Endothelial cell of umbilical vein (primary cell): ENCODE measurements at regions of chr3 and their contacts with region 1.

Region 1: GRCh38 chr3:127574880-127575878 is 15.4 kb downstream of the TPRA1 start:
- DNase-seq: peak; percentile 93
- H3K4me3 ChIP-seq: no peak overlapping the region
- H3K27ac ChIP-seq: no peak overlapping the region
- H3K4me1 ChIP-seq: no peaks in the 10 kb centered on the region
- H3K27me3 ChIP-seq: no peaks in the 10 kb centered on the region
- CTCF ChIP-seq: peak; percentile 99
- POLR2A ChIP-seq: no peak

Region 2: DNA sequence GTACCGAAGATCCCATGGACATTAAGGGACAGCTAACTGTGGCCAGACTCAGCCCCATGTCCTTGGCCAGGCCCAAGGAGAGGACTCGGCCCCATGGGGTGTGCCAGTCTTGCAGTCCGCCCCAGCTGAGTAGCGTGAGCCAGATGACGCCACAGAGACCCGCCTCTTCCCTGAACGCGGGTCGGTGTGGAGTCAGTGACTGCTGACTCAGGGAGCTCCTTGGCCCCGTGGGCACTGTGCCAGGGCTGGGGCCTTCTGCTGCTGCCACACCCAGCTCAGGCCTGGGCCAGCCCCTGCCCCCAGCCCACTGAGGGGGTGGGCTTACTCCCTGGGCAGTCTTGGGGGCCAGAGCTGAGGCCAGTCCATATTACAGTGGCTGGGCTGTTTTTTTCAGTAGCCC is 539.5 kb before region 1 on chr3:
- CTCF ChIA-PET with region 1: no interaction called
- POLR2A ChIA-PET with region 1: no interaction called
- dilution Hi-C with region 1: no loop called
- intact Hi-C with region 1: no loop called
- DNase-seq: no peak
- H3K4me3 ChIP-seq: no peak overlapping the region
- H3K27ac ChIP-seq: no peak overlapping the region
- H3K4me1 ChIP-seq: no peaks in the 10 kb centered on the region
- H3K27me3 ChIP-seq: no peaks in the 10 kb centered on the region
- CTCF ChIP-seq: no peak
- POLR2A ChIP-seq: no peak

Region 3: DNA sequence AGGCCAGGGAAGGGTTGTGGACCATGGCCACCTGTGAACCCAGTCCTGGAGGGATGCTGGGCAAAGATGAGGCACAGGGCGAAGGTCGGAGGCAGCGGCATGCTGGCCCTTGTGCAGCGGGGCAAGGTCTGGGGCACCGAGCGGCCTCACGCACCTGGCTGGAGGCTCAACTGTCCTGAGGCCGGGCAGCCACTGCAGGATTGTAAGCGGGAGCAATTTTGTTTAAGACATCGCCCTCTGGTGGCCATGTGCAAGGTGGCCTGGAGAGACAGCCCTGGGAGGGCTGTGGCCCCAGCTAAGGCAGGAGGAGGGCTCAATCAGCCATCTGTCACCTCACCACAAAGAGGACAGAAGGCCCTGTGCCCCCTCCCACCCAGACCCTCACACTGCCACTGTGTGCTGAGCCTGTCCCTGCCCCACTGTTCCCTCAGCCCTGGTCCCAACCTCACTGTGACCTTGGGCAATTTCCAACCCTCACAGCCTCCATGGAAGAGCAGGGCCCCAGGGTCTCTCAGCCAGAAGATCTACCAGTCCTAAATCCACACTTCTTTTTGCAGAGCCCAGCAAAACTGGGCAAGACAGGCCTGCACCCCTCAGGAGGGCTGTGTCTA is 30.9 kb before region 1 on chr3:
- CTCF ChIA-PET with region 1: interaction called, 11 read pairs
- POLR2A ChIA-PET with region 1: no interaction called
- dilution Hi-C with region 1: no loop called
- intact Hi-C with region 1: no loop called
- DNase-seq: peak; percentile 47
- H3K4me3 ChIP-seq: no peak overlapping the region
- H3K27ac ChIP-seq: no peak overlapping the region
- H3K4me1 ChIP-seq: peaks cover 4% of the 10 kb centered on the region
- H3K27me3 ChIP-seq: no peaks in the 10 kb centered on the region
- CTCF ChIP-seq: peak; percentile 80 to 89
- POLR2A ChIP-seq: no peak

Region 4: DNA sequence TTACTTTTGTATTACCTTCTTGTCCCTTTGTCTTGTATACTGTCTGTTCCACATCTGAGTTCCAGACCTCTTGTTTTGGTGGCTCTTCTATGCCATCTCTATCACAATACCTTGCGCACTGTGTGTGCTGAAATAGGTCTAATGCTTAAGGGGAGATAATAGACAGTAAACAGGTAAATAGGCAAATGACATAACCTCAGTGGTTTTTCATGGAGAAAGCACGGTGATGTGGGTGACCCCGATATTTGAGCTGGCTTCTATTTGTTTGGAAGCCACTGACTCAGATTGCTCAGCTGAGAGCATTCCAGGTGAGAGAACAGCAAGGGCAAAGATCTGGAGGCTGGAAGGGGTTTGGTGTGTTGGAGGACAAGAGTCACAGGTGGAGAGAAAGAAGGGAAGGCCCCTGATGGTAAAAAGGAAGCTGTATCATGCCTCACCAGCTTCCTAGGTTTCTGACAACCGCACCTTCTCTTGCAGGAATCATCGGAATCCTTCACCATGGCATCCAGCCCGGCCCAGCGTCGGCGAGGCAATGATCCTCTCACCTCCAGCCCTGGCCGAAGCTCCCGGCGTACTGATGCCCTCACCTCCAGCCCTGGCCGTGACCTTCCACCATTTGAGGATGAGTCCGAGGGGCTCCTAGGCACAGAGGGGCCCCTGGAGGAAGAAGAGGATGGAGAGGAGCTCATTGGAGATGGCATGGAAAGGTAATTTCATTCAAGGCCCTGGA is 23.8 kb after region 1 on chr3:
- CTCF ChIA-PET with region 1: interaction called, 43 read pairs
- POLR2A ChIA-PET with region 1: no interaction called
- dilution Hi-C with region 1: no loop called
- intact Hi-C with region 1: no loop called
- DNase-seq: no peak
- H3K4me3 ChIP-seq: peak overlapping the region; percentile 27 to 66 (median 54)
- H3K27ac ChIP-seq: peak overlapping the region; percentile 55
- H3K4me1 ChIP-seq: peaks cover 20% of the 10 kb centered on the region
- H3K27me3 ChIP-seq: no peaks in the 10 kb centered on the region
- CTCF ChIP-seq: no peak
- POLR2A ChIP-seq: no peak

Region 5: DNA sequence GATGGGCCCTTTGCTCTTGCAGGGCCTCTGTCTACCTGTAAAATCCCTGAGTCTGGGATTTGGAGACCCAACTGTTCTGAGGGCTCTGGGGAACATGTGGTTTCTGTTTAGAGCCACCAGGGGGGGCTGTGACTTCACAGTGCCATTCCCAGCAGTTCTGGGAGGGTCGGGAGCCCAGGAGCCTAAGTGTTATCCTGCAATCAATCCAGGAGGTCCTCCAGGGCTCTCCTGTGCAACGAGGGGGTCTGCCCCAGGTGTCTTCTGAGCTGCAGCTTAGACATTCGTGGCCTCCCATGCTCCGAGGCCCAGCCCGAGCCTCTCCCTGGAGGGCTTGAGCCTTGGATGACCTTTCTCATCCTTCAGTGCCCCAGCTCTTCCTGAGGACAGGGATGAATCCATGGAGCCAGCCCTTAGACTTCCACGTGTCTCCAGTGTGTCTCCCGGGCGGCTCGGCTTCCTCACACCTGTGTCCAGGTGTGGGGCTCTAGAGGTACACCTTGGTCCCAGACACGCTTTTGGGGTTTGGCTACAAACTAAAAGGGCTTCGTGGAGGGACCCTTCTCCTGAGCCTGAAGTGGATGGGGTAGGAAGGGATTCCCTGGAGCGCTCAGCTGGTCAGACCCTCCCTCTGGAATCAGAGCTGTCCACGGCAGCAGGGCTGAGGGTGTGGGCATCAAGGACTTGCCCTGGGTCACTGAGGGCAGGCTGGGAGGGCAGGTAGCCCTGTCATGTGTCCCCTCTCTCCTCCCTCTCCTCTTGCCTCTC is 77.2 kb after region 1 on chr3:
- CTCF ChIA-PET with region 1: interaction called, 15 read pairs
- POLR2A ChIA-PET with region 1: no interaction called
- dilution Hi-C with region 1: no loop called
- intact Hi-C with region 1: no loop called
- DNase-seq: peak; percentile 57
- H3K4me3 ChIP-seq: no peak overlapping the region
- H3K27ac ChIP-seq: no peak overlapping the region
- H3K4me1 ChIP-seq: no peaks in the 10 kb centered on the region
- H3K27me3 ChIP-seq: peaks cover 0 to 4% of the 10 kb centered on the region in 2 experiments
- CTCF ChIP-seq: peak; percentile 84 to 88
- POLR2A ChIP-seq: no peak

Region 6: GRCh38 chr3:127690823-127691452 is 115.8 kb after region 1 on chr3:
- CTCF ChIA-PET with region 1: interaction called, 10 read pairs
- POLR2A ChIA-PET with region 1: no interaction called
- dilution Hi-C with region 1: no loop called
- intact Hi-C with region 1: no loop called
- DNase-seq: peak; percentile 48
- H3K4me3 ChIP-seq: no peak overlapping the region
- H3K27ac ChIP-seq: no peak overlapping the region
- H3K4me1 ChIP-seq: no peaks in the 10 kb centered on the region
- H3K27me3 ChIP-seq: no peaks in the 10 kb centered on the region
- CTCF ChIP-seq: peak; percentile 47 to 87
- POLR2A ChIP-seq: no peak

Region 7: DNA sequence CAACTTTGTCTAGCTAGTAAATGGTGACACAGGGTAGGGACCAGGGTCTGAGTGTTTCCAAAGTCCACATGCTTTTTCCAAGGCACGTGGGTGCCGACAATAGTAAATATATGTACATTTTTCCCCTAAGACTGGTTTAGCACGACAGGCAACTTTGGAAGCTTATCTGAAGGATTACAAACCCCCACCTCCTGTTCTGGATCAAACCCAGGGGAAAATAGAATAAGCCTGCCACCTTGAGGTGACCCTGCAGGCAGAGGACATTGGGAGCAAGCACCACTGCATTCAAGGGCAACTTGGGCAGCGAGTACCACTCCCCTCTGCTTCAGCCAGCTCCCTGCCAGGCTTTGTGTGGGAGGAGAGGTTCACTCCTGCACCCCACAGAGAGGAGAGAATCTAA is 384.7 kb after region 1 on chr3:
- CTCF ChIA-PET with region 1: interaction called, 28 read pairs
- POLR2A ChIA-PET with region 1: no interaction called
- dilution Hi-C with region 1: no loop called
- intact Hi-C with region 1: no loop called
- DNase-seq: peak; percentile 31
- H3K4me3 ChIP-seq: no peak overlapping the region
- H3K27ac ChIP-seq: no peak overlapping the region
- H3K4me1 ChIP-seq: no peaks in the 10 kb centered on the region
- H3K27me3 ChIP-seq: peaks cover 0 to 11% of the 10 kb centered on the region in 2 experiments
- CTCF ChIP-seq: peak in 1 of 2 donors; percentile 25
- POLR2A ChIP-seq: no peak

Region 8: DNA sequence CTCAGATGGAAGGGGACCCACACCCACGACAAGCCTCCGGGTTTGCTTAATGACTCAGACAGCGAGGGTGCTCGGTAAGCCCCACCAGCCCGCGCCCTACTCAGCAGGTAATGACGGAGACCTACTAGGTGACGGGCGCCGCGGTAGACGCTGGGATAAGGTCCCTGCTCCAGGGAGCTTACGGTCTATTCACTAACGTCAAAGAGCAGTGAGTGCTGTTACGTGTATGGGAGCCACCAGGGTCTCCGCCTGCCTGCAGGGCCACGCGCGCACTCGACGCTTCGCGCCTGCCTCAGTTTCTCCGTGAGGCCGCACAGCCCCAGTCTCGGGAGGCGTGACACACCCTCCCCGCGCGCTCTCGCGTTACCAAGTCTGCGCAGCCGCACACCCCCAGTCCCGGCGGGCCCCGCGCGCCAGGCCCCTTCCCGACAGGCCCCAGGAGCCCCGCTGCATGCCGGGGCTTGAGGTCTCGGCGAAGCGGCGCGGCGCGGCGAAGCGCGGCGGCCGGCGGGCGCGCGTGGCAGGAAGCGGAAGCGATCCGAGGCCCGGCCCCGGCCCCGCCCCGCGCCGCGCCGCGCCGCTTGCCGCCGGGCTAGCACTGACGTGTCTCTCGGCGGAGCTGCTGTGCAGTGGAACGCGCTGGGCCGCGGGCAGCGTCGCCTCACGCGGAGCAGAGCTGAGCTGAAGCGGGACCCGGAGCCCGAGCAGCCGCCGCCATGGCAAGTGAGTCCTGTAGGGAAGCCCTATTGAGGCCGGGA is 476.8 kb after region 1 on chr3 and contains the start of gene SEC61A1:
- CTCF ChIA-PET with region 1: interaction called, 11 read pairs
- POLR2A ChIA-PET with region 1: no interaction called
- dilution Hi-C with region 1: no loop called
- intact Hi-C with region 1: loop called (anchors 5 kb)
- DNase-seq: peak; percentile 95
- H3K4me3 ChIP-seq: peak within 1 kb of the TSS; percentile 90 to 99 (median 99)
- H3K27ac ChIP-seq: peak within 1 kb of the TSS; percentile 92
- H3K4me1 ChIP-seq: peaks cover 39% of the 10 kb centered on the region
- H3K27me3 ChIP-seq: peaks cover 5 to 14% of the 10 kb centered on the region in 2 experiments
- CTCF ChIP-seq: no peak
- POLR2A ChIP-seq: peak; percentile 75
- total RNA-seq, gene SEC61A1: 280 and 312 TPM in 2 replicates